ENCODE measurements at regions of chr11 and their contacts with region 1.

Region 1: DNA sequence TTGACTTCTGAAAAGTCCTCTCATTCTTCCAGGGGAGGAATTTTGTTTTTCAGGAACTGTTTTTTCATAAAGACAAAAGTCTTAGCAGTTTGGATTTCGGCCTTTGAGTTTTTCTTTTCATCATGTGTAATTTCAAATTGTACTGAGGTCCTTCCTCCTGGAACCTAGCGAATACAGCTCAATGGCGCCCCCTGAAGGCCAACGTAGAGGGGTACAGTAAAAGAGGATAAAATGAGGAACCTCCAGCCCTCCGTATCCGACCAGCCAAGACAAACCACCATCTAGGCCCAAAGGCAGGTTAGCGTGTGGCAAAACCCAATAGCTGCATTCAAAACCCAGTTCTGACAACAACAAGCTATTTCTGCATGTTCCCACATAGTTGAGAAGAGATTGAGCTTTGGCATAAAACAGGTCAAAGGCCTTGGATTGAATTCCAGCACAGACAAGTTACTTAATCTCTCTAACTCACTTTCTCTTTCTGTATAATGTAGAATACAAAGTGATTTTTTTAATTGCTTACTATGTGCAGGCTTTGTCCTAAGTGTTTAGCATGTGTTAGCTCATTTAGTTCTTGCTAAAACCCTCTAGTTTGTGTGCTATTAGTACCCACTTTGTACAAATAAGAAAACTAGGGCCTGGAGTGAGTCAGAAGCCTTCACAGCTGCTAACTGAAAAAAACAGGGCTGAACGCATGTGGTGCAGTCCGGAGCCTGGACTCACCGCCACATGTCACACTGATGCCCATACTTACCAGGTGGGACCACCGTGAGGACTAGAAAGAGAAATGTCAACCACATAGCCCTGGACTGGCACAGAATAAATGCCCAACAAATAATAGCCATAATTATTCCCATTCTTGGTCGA is 43.2 kb upstream of the ETS1 start:
- DNase-seq: peak; percentile 97
- ATAC-seq: peak; percentile 73
- H3K4me3 Mint-ChIP-seq: peak overlapping the region; percentile 57
- H3K27ac Mint-ChIP-seq: peak overlapping the region; percentile 88
- H3K4me1 Mint-ChIP-seq: peaks cover 66% of the 10 kb centered on the region
- H3K27me3 Mint-ChIP-seq: no peaks in the 10 kb centered on the region

Region 2: GRCh38 chr11:128172046-128172878 is 458.3 kb before region 1 on chr11:
- CTCF ChIA-PET with region 1: interaction called, 128 read pairs
- POLR2A ChIA-PET with region 1: interaction called, 6 read pairs
- intact Hi-C with region 1: loop called (anchors 1 kb)
- DNase-seq: peak; percentile 94
- ATAC-seq: peak; percentile 84
- H3K4me3 Mint-ChIP-seq: no peak overlapping the region
- H3K27ac Mint-ChIP-seq: no peak overlapping the region
- H3K4me1 Mint-ChIP-seq: peaks cover 22% of the 10 kb centered on the region
- H3K27me3 Mint-ChIP-seq: peaks cover 5% of the 10 kb centered on the region

Region 3: GRCh38 chr11:128342511-128343134 is 288.0 kb before region 1 on chr11:
- CTCF ChIA-PET with region 1: interaction called, 3 read pairs
- POLR2A ChIA-PET with region 1: interaction called, 5 read pairs
- intact Hi-C with region 1: loop called (anchors 2 kb)
- DNase-seq: peak; percentile 91
- ATAC-seq: peak; percentile 68
- H3K4me3 Mint-ChIP-seq: peak overlapping the region; percentile 65
- H3K27ac Mint-ChIP-seq: peak overlapping the region; percentile 95
- H3K4me1 Mint-ChIP-seq: peaks cover 97% of the 10 kb centered on the region
- H3K27me3 Mint-ChIP-seq: no peaks in the 10 kb centered on the region

Region 4: DNA sequence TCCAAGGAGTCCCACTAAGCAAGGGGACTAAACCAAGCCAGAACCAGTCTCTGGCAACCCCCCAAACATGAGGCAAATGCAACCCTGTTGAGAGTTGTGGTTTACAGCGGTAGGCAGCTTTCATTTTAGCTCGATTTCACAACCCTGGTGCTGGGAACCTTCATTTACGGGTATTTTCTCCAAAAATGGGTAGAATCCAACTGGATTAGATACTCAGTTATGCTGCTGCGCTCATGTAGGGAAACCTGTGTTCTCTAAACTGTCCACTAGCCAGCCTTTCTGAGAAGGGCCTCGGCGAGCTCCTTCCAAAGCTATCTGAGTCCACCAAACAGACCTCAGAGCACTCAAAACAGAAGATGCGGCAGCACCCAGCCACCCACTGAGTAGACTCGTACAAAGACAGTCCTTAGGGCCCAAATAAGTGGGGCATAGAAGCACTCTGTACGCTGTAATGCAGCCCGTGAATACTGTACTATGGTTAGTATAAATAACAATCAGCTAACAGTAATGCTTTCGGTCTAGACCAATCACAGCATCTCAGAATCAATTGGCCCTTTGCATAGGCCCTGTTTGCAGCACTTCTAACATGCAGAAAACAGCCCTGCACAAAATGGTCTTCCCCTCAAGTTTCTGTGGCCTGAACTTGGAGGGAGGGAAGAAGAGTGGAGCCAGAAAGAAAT is 147.9 kb before region 1 on chr11:
- CTCF ChIA-PET with region 1: interaction called, 12 read pairs
- POLR2A ChIA-PET with region 1: interaction called, 5 read pairs
- intact Hi-C with region 1: no loop called
- DNase-seq: peak; percentile 75
- ATAC-seq: peak; percentile 71
- H3K4me3 Mint-ChIP-seq: peak overlapping the region; percentile 63
- H3K27ac Mint-ChIP-seq: peak overlapping the region; percentile 98
- H3K4me1 Mint-ChIP-seq: peaks cover 96% of the 10 kb centered on the region
- H3K27me3 Mint-ChIP-seq: no peaks in the 10 kb centered on the region

Region 5: DNA sequence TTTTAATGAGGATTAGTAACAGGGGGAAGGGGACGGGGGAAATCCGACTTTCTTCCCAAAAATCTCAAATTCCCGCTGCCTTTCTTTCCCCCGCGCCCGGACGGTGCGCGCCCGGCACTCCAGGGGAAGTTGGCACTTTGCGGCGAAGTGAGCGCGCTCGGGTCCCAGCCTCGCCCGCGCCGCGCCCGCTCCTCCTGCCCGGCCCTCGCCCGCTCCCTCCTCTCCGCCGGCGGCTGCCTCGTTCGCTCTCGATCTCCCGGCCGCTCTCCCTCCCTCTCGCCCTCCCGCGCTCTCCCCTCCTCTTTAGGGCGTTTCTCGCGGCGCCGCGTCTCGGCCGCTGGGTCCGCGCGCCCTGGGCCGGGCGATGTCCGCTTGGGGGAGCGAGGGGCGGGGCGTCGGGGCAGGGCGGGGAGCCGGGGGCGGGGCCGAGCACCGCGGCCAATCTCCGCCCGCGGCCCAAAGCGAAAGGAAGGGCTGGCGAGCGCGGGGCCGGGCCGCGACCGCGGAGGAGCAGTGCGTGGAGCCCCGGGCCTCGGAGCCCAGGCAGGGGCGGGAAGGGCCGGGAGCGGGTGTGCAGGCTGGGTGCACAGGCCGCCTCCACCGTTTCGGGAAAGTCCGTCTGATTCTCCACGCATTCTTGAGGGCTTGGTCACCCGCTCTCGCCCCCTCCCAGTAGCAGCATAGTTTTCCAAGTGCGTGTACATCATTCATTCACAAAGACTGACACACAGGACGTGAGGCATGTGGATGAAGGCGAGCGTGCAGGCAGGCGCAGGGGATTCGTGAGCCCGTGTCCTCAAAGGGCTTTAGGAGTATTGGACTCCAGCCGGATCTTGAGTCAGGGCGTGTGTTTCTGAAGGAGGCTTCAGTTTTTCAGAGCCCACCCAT is 108.3 kb before region 1 on chr11:
- CTCF ChIA-PET with region 1: interaction called, 63 read pairs
- POLR2A ChIA-PET with region 1: interaction called, 10 read pairs
- intact Hi-C with region 1: loop called (anchors 1 kb)
- DNase-seq: peak; percentile 95
- ATAC-seq: peak; percentile 70
- H3K4me3 Mint-ChIP-seq: peak overlapping the region; percentile 96
- H3K27ac Mint-ChIP-seq: peak overlapping the region; percentile 99
- H3K4me1 Mint-ChIP-seq: peaks cover 42% of the 10 kb centered on the region
- H3K27me3 Mint-ChIP-seq: no peaks in the 10 kb centered on the region

Region 6: GRCh38 chr11:128643661-128644317 is 13.2 kb after region 1 on chr11:
- CTCF ChIA-PET with region 1: interaction called, 10 read pairs
- POLR2A ChIA-PET with region 1: no interaction called
- intact Hi-C with region 1: no loop called
- DNase-seq: no peak
- ATAC-seq: no peak
- H3K4me3 Mint-ChIP-seq: no peak overlapping the region
- H3K27ac Mint-ChIP-seq: no peak overlapping the region
- H3K4me1 Mint-ChIP-seq: peaks cover 5% of the 10 kb centered on the region
- H3K27me3 Mint-ChIP-seq: no peaks in the 10 kb centered on the region

Region 7: GRCh38 chr11:129302386-129303101 is 671.9 kb after region 1 on chr11:
- CTCF ChIA-PET with region 1: no interaction called
- POLR2A ChIA-PET with region 1: no interaction called
- intact Hi-C with region 1: no loop called
- DNase-seq: no peak
- ATAC-seq: peak; percentile 62
- H3K4me3 Mint-ChIP-seq: no peak overlapping the region
- H3K27ac Mint-ChIP-seq: no peak overlapping the region
- H3K4me1 Mint-ChIP-seq: peaks cover 19% of the 10 kb centered on the region
- H3K27me3 Mint-ChIP-seq: peaks cover 15% of the 10 kb centered on the region